ENCODE measurements at regions of chr3 and their contacts with region 1.

Region 1: DNA sequence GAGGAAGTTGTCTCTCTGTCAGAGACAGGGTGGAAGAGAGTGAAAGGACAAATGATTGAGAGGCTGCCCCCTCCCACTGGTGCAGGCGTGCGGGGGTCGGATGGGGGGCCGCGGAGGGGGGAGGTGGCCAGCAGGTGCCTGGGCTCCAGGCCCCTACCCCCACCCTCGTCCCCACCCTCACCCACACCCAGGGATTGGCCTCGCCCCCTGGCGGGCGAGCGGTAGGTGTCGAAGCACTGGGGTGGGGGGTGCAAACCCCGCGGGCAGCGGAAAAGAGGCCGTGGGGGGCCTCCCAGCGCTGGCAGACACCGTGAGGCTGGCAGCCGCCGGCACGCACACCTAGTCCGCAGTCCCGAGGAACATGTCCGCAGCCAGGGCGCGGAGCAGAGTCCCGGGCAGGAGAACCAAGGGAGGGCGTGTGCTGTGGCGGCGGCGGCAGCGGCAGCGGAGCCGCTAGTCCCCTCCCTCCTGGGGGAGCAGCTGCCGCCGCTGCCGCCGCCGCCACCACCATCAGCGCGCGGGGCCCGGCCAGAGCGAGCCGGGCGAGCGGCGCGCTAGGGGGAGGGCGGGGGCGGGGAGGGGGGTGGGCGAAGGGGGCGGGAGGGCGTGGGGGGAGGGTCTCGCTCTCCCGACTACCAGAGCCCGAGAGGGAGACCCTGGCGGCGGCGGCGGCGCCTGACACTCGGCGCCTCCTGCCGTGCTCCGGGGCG is at the start of gene KAT2B:
- DNase-seq: peak; percentile 89
- H3K4me3 ChIP-seq: peak within 1 kb of the TSS; percentile 72 to 80 (median 74)
- H3K27ac ChIP-seq: peak within 1 kb of the TSS; percentile 95 to 99 (median 98)
- H3K4me1 ChIP-seq: peaks cover 0 to 44% (median 35%) of the 10 kb centered on the region in 4 donors
- H3K27me3 ChIP-seq: no peaks in the 10 kb centered on the region
- CTCF ChIP-seq: peak; percentile 43 to 75 (median 60)
- EP300 ChIP-seq: no peak
- POLR2A ChIP-seq: peak in 1 of 2 donors; percentile 33
- total RNA-seq, gene KAT2B: 27.2 to 49.2 (median 42.1) TPM

Region 2: GRCh38 chr3:19632099-19633074 is 407.5 kb before region 1 on chr3:
- intact Hi-C with region 1: no loop called
- DNase-seq: no peak
- H3K4me3 ChIP-seq: no peak overlapping the region
- H3K27ac ChIP-seq: no peak overlapping the region
- H3K4me1 ChIP-seq: no peaks in the 10 kb centered on the region
- H3K27me3 ChIP-seq: no peaks in the 10 kb centered on the region
- CTCF ChIP-seq: no peak
- EP300 ChIP-seq: no peak
- POLR2A ChIP-seq: no peak

Region 3: GRCh38 chr3:19885468-19885867 is 154.5 kb before region 1 on chr3:
- intact Hi-C with region 1: loop called (anchors 5 kb)
- DNase-seq: no peak
- H3K4me3 ChIP-seq: no peak overlapping the region
- H3K27ac ChIP-seq: no peak overlapping the region
- H3K4me1 ChIP-seq: peaks cover 0 to 18% (median 12%) of the 10 kb centered on the region in 4 donors
- H3K27me3 ChIP-seq: no peaks in the 10 kb centered on the region
- CTCF ChIP-seq: peak in 2 of 4 experiments; percentile 12 to 45
- EP300 ChIP-seq: no peak
- POLR2A ChIP-seq: no peak

Region 4: GRCh38 chr3:19946832-19947548 is 92.9 kb before region 1 on chr3 and contains the start of gene RAB5A:
- intact Hi-C with region 1: loop called (anchors 1 kb)
- DNase-seq: peak; percentile 99
- H3K4me3 ChIP-seq: peak within 1 kb of the TSS; percentile 70 to 100 (median 94)
- H3K27ac ChIP-seq: peak within 1 kb of the TSS; percentile 94 to 100 (median 98)
- H3K4me1 ChIP-seq: peaks cover 0 to 37% (median 18%) of the 10 kb centered on the region in 4 donors
- H3K27me3 ChIP-seq: no peaks in the 10 kb centered on the region
- CTCF ChIP-seq: no peak
- EP300 ChIP-seq: peak in 2 of 4 donors; percentile 64 to 84
- POLR2A ChIP-seq: peak; percentile 67 to 75
- total RNA-seq, gene RAB5A: 61.4 to 65.3 (median 64.1) TPM

Region 5: DNA sequence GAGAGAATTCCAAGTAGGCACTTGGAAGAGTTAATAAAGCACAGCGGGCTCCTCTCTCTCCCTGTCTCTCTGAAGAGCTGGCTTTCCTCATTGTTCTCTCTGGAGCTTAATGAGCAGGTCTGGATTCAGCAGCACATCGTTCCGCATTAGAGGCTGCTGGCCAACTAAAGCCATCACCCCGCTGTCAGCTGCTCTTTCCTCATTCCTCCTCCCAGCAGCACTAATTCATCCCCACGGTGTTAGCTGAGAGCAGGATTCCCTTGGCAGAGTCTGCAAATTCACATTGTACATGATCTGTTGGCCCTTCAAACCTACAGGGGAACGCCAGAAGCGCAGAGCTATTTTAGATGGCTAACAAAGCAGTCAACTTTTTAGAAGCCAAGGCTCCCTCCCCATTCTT is 101.9 kb after region 1 on chr3:
- intact Hi-C with region 1: loop called (anchors 5 kb)
- DNase-seq: peak; percentile 89
- H3K4me3 ChIP-seq: no peak overlapping the region
- H3K27ac ChIP-seq: peak overlapping the region; percentile 43 to 80 (median 61)
- H3K4me1 ChIP-seq: peaks cover 0 to 32% (median 29%) of the 10 kb centered on the region in 4 donors
- H3K27me3 ChIP-seq: no peaks in the 10 kb centered on the region
- CTCF ChIP-seq: peak in 2 of 4 experiments; percentile 25 to 33
- EP300 ChIP-seq: peak in 1 of 4 donors; percentile 73
- POLR2A ChIP-seq: no peak

Region 6: DNA sequence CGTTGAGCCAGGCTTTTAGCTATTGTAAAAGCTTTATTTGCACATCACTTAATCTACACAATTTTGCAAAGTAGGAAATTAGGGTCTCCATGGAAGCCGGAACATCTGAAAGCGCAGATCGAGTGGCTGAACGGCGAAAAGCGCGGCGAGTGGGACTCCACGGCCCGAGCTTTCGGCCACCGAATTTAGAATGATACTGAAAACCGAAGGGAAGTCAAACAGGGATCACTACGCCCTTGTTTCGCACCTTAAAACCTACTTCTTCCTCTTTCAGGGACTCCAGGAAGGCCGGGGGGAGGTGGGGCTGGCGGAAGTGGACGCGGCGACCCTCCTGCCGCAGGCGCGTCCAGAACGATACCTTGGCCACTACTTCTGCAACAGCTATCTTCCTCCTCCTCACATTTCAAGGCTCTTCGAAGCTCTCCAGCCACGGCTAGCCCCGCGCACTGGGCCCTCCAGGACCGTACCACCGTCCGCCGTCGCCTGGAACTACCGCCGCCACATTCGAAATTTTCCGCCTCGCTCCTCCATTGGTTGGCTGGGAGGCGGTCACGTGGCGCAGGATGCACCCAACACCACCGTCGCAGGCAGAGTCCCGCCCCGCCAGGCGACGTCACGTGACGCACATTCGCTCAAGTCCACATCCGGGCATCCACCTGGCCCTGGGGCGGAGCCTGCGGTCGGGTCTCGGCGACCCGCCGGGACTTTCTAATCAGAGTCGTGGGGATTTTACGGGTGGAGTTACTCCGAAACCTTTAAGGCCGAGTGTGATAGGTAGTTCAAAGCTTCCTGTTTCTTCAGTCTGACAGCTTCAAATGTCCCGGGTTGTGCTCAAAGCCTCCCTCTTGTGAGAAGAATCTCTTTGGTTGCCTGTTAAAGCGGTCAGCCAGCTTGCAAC is 146.0 kb after region 1 on chr3 and contains the start of gene SGO1:
- intact Hi-C with region 1: loop called (anchors 2 kb)
- DNase-seq: peak; percentile 99
- H3K4me3 ChIP-seq: peak within 1 kb of the TSS; percentile 53 to 69 (median 63)
- H3K27ac ChIP-seq: peak within 1 kb of the TSS; percentile 86 to 91 (median 87)
- H3K4me1 ChIP-seq: peaks cover 0 to 18% (median 11%) of the 10 kb centered on the region in 4 donors
- H3K27me3 ChIP-seq: no peaks in the 10 kb centered on the region
- CTCF ChIP-seq: no peak
- EP300 ChIP-seq: peak in 1 of 4 donors; percentile 42
- POLR2A ChIP-seq: peak; percentile 79 to 89
- total RNA-seq, gene SGO1: 0.16 to 1.4 TPM in 2 of 4 donors, not detected in the others

Measured in sigmoid colon (tissue), 7 donors.